SK-N-SH (cell line): ENCODE measurements at regions of chr4 and their contacts with region 1.

Region 1: DNA sequence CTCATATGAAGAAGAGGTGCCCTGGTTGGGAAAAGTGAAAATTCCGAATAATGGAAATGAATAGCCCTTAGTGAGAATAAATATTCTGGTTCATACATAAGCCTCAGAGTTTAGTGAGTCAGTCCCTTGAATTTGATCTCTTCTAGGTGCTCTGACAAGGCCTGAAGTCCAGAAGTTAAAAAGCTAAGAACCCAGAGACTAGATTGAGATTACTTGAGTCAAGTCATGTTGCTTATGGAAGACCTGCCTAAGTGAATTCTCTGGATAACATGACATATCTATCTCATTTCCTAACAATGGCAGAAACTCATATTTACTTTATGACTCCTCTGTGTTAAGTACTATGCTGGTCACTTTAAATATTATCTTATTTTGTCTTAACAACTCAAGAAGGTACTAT is 10.5 kb upstream of the PRSS48 start:
- DNase-seq: no peak
- H3K4me3 ChIP-seq: no peak overlapping the region
- H3K27ac ChIP-seq: no peak overlapping the region; a peak in 1 of 4 replicates
- H3K4me1 ChIP-seq: peaks cover 7% of the 10 kb centered on the region in 2 experiments; a peak in 2 of 4 replicates
- H3K27me3 ChIP-seq: no peaks in the 10 kb centered on the region
- CTCF ChIP-seq: no peak
- EP300 ChIP-seq: no peak
- RAD21 ChIP-seq: no peak

Region 2: GRCh38 chr4:151276787-151277562 is 10.5 kb after region 1 on chr4 and contains the start of gene PRSS48:
- CTCF ChIA-PET with region 1: interaction called, 15 read pairs
- POLR2A ChIA-PET with region 1: no interaction called
- DNase-seq: peak; percentile 68
- H3K4me3 ChIP-seq: peak within 1 kb of the TSS in 1 of 2 experiments; percentile 35; a peak in 1 of 4 replicates
- H3K27ac ChIP-seq: no peak within 1 kb of the TSS
- H3K4me1 ChIP-seq: no peaks in the 10 kb centered on the region; a peak in 1 of 4 replicates
- H3K27me3 ChIP-seq: no peaks in the 10 kb centered on the region
- CTCF ChIP-seq: peak; percentile 89
- EP300 ChIP-seq: no peak
- RAD21 ChIP-seq: peak; percentile 78
- polyA plus RNA-seq, gene PRSS48: not detected in 2 replicates